Posterior cingulate gyrus (tissue), 11 donors: ENCODE measurements at regions of chr5 and their contacts with region 1.

Region 1: DNA sequence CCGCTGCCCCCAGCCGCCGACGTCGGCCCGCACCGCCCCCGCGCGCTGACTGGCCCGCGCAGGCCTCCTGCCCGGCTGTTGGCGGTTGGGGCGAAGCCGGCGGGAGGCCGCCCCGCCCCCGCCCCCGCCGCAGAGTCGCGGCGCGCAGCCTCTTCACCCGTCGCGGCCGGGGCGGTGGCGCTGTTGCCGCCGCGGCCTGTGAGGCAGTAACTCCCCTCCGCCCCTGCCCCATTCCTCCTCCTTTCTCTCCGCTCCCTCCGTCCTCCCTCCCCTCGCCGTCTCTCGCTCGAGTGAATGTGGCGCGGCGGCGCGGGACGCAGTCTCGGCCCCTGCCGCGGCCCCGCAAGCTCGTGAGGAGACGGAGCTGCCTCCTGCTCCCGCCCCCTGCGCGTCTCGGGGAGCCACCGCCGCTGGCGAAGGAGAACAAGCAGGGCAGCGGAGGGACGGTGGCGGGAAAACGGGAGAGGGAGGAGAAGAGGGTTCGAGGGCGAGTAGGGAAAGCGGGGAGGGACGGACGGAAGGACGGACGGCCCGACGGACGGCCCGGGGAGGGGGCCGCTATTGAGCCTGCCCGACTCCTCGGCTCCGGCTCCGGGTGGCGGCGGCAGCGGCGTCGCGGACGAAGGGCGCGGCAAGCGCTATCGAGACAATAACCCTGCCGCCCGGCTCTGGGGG is 637 bp upstream of the ERBIN start:
- DNase-seq: peak; percentile 79 to 98 (median 85)

Region 2: DNA sequence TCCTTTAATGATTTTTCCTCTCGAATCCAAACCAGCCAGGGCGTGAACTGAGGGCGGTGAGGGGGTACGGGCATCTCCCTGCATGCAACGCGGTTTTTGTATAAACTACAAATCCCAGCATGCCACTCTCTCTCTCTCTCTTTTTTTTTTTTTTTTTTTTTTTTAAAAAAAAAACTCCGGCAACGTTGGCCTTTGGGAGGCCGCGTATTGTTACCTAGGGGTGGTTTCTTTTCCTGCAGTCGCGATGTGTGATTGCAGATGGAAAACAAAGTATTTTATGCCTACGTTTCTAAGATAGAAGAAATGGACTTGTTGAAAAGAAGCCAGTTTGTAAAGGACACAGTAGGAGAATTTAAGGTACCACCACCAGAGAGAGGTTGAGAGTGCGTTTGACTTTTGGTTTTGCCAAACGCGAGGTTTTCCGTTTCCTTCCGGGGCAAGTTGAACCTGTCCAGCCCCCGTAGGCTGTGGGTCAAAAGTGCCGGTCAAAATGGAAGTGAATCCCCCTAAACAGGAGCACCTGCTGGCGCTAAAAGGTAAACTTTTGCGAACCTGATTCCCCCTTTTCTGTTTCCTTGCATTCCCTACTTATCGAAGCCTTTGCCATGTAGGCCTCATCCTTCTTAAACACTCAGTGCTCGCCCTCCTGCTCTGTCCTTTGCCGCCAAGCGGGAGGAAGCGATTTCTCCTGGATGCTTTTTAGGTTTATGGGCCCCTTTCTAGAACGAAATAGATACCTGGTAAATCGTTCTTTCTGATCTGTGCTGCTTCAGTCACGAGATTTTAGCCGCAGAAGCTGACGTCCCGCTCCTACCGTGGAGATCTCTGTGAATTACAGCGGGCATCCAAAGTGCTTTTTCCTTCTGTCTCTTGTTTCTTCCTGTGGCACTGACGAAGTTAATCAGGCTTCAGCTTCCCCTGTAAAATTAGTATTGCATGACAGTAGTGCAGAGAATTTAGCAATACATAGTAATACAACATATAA is 300.9 kb before region 1 on chr5 and contains the starts of genes SHLD3 and TRAPPC13:
- intact Hi-C with region 1: loop called (anchors 10 kb)
- DNase-seq: peak; percentile 77 to 97 (median 86)

Region 3: GRCh38 chr5:65721720-65722574 is 203.8 kb before region 1 on chr5 and contains the starts of genes NLN and SGTB:
- intact Hi-C with region 1: loop called (anchors 5 kb)
- DNase-seq: peak; percentile 84 to 99 (median 90)

Region 4: DNA sequence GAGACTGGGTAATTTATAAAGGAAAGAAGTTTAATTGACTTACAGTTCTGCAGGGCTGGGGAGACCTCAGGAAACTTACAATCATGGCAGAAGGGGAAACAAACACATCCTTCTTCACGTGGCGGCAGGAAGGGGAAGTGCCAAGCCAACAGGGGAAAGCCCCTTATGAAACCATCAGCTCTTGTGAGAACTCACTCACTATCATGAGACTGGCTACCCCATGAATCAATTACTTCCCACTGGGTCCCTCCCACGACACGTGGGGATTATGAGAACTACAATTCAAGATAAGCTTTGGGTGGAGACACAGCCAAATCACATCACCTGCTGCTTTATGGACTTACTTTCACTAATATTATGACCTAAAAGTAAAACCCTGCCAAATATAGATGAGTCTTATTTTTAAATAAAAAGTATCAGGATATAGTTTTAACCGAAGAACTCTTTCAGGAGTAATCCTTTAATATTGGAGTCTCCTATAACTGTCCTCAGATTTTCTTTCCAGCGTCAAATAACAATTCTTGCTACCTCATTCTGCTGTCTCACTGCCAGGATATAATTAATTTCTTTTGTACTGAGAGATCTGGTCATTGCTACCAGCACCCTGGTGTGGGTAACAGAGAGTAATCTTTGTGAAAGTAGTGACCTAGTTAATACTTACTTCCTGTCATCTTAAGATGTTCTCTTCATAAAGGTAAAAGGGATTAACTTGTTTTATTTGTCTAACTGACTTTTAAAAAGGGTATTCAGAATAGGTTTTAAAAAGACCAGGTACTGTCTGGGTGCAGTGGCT is 135.2 kb before region 1 on chr5:
- intact Hi-C with region 1: loop called (anchors 10 kb)
- DNase-seq: no peak

Region 5: GRCh38 chr5:65818592-65818991 is 107.1 kb before region 1 on chr5:
- intact Hi-C with region 1: loop called (anchors 5 kb)
- DNase-seq: peak in 8 of 10 donors; percentile 23 to 95 (median 70)

Region 6: DNA sequence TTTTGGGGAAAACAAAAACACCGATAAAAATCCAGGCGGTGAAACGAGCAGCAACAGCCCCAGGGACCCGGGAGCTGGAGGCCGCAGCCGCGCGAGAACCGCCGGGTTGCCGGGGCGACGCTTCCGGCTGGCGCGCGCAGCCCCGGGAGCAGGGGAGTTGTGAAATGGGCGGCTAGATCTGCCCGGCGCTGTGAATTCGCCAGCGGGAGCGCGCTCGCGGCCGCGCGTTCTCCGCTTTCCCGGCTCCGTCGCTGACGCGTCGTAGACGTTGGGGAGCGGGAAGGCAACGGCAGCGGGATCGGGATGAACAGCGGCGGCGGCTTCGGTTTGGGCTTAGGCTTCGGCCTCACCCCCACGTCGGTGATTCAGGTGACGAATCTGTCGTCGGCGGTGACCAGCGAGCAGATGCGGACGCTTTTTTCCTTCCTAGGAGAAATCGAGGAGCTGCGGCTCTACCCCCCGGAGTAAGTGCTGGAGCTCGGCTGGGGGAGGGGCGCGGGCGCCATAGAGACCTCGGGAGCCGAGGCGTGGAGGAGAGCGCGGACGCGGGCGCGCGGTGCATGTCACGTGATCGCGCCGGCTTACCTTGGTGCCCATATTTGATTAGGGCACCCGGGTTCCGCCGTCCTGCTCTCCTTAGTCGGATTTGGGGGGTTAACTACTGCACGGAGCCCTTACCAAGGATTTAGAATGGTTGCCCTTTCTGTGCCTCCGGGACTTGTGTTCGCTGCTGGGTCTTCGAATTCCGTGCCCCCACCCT is 218.5 kb after region 1 on chr5 and contains the start of gene SREK1:
- intact Hi-C with region 1: loop called (anchors 1 kb)
- DNase-seq: peak; percentile 85 to 98 (median 90)